ENCODE measurements at regions of chr12 and their contacts with region 1.

Region 1: GRCh38 chr12:78118036-78118435 is 287.3 kb downstream of the NAV3 start:
- DNase-seq: no peak
- ATAC-seq: no peak
- H3K4me3 ChIP-seq: no peak overlapping the region
- H3K27ac ChIP-seq: no peak overlapping the region
- H3K4me1 ChIP-seq: no peaks in the 10 kb centered on the region
- H3K27me3 ChIP-seq: no peaks in the 10 kb centered on the region

Region 2: DNA sequence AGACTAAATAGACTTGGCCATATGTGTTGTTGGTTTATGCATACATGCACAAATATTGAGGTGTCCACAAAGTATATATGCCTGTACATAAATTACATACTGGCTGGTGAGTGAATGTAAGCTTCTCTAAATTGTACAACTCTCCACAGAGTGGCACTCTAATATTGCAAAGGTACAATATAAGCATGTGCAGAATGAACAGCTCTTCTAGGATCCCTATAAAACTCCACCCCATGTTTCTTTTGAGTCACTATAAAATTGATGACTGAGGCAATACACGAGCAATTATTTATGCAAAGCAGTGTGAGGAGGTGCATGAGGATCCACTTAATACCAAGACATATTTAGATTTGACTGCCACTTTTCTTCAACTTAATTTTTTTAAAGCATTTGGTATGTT is 115.2 kb before region 1 on chr12:
- intact Hi-C with region 1: loop called in 2 of 4 experiments (anchors 10 kb)
- DNase-seq: no peak
- ATAC-seq: no peak
- H3K4me3 ChIP-seq: no peak overlapping the region
- H3K27ac ChIP-seq: no peak overlapping the region
- H3K4me1 ChIP-seq: no peaks in the 10 kb centered on the region
- H3K27me3 ChIP-seq: no peaks in the 10 kb centered on the region

Region 3: GRCh38 chr12:78081590-78082314 is 36.3 kb before region 1 on chr12:
- intact Hi-C with region 1: no loop called
- DNase-seq: no peak
- ATAC-seq: no peak
- H3K4me3 ChIP-seq: no peak overlapping the region
- H3K27ac ChIP-seq: no peak overlapping the region
- H3K4me1 ChIP-seq: no peaks in the 10 kb centered on the region
- H3K27me3 ChIP-seq: no peaks in the 10 kb centered on the region

Measured in right cardiac atrium (tissue), 5 donors.